CD8-positive, alpha-beta memory T cell (primary cell): ENCODE measurements at regions of chr17 and their contacts with region 1.

Region 1: GRCh38 chr17:32936894-32937500 is 9.0 kb downstream of the TMEM98 start:
- DNase-seq: peak; percentile 32 to 68 (median 39)
- H3K4me3 ChIP-seq: no peak overlapping the region
- H3K4me3 Mint-ChIP-seq: peak overlapping the region in 4 of 7 donors; percentile 9 to 63 (median 46)
- H3K27ac ChIP-seq: no peak overlapping the region
- H3K27ac Mint-ChIP-seq: no peak overlapping the region
- H3K4me1 ChIP-seq: no peaks in the 10 kb centered on the region
- H3K4me1 Mint-ChIP-seq: peaks cover 0 to 6% (median 4%) of the 10 kb centered on the region in 3 donors
- H3K27me3 ChIP-seq: no peaks in the 10 kb centered on the region
- H3K27me3 Mint-ChIP-seq: peaks cover 7 to 50% of the 10 kb centered on the region in 2 donors

Region 2: DNA sequence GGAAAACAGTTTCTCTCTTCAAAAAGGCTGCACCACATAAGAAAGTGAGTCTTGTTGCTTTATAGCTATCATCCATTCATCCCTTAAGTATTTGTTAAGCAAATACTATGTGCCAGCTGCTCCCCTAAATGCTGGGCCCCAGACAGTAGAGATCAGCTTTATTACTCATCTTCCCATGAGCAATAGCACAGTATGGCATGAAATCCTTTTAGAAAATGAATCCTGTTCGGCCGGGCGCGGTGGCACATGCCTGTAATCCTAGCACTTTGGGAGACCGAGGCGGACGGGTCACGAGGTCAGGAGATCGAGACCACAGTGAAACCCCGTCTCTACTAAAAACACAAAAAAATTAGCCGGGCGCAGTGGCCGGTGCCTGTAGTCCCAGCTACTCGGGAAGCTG is 159.6 kb before region 1 on chr17:
- CTCF ChIA-PET with region 1: interaction called, 56 read pairs
- POLR2A ChIA-PET with region 1: no interaction called
- DNase-seq: no peak
- H3K4me3 ChIP-seq: no peak overlapping the region
- H3K4me3 Mint-ChIP-seq: no peak overlapping the region
- H3K27ac ChIP-seq: no peak overlapping the region
- H3K27ac Mint-ChIP-seq: no peak overlapping the region
- H3K4me1 ChIP-seq: no peaks in the 10 kb centered on the region
- H3K4me1 Mint-ChIP-seq: no peaks in the 10 kb centered on the region
- H3K27me3 ChIP-seq: no peaks in the 10 kb centered on the region
- H3K27me3 Mint-ChIP-seq: no peaks in the 10 kb centered on the region

Region 3: DNA sequence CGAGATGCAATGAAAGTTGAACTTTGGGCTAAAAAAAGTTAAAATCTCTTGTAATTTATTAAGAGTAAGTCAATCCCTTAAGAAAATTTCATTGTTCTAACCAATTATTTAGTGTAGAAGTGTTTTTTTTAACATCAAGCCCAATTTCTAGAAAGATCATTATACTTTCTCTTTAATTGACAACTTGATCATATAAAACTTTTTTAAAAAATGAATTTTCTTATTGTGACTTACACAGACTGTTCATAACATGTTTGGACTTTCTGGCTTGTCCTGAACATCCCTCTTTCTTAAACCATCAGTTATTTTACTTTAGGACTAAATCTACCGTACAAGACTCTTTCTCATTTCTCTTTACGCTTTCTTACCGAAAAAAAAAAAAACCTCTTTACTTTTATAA is 35.3 kb before region 1 on chr17:
- CTCF ChIA-PET with region 1: no interaction called
- POLR2A ChIA-PET with region 1: no interaction called
- DNase-seq: no peak
- H3K4me3 ChIP-seq: no peak overlapping the region
- H3K4me3 Mint-ChIP-seq: no peak overlapping the region
- H3K27ac ChIP-seq: no peak overlapping the region
- H3K27ac Mint-ChIP-seq: no peak overlapping the region
- H3K4me1 ChIP-seq: no peaks in the 10 kb centered on the region
- H3K4me1 Mint-ChIP-seq: peaks cover 4 to 13% (median 12%) of the 10 kb centered on the region in 3 donors
- H3K27me3 ChIP-seq: no peaks in the 10 kb centered on the region
- H3K27me3 Mint-ChIP-seq: peaks cover 12 to 49% of the 10 kb centered on the region in 2 donors

Region 4: GRCh38 chr17:33113276-33113990 is 176.4 kb after region 1 on chr17:
- CTCF ChIA-PET with region 1: no interaction called
- POLR2A ChIA-PET with region 1: no interaction called
- DNase-seq: no peak
- H3K4me3 ChIP-seq: no peak overlapping the region
- H3K4me3 Mint-ChIP-seq: no peak overlapping the region
- H3K27ac ChIP-seq: no peak overlapping the region
- H3K27ac Mint-ChIP-seq: no peak overlapping the region
- H3K4me1 ChIP-seq: no peaks in the 10 kb centered on the region
- H3K4me1 Mint-ChIP-seq: no peaks in the 10 kb centered on the region
- H3K27me3 ChIP-seq: no peaks in the 10 kb centered on the region
- H3K27me3 Mint-ChIP-seq: peaks cover 8 to 34% of the 10 kb centered on the region in 2 donors